Ascending aorta (tissue), 2 donors: ENCODE measurements at regions of chr20 and their contacts with region 1.

Region 1: DNA sequence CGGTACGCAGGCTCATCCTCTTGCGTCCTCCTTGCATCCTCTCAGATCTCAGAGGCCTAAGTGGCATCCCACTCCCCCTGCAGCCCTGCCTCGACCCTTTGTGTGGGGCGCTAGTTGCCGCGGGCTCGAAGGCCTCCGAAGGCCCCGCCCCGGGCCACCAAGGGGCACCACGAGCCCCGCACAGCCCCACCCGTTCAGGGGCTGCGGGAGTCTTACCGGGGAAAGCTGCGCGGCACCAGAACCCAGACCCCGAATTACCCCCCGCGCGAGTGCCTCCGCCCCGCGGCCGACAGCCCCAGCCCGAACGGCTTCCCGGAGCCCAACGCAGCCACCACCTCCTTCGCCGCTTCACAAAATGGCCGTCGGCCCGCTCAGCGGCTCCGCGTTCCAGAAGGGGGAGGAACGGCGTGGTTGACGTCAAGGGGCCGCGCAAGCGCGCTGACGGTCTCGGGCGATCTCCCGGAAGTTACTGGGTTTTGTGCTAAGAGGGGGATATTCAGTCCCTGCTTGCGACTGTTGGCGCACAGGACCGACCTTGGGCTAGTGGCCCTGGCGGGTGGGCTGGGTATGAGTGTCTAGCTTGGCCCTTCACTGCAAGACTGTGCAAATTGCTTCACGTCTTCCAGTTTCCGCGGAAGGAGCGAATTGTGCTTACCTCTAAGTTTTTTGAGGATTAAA is at the starts of genes CPNE1 and RBM12:
- DNase-seq: peak; percentile 61 to 95
- H3K4me3 ChIP-seq: peak within 1 kb of the TSS; percentile 91 to 96
- H3K27ac ChIP-seq: peak within 1 kb of the TSS; percentile 97 to 98
- H3K4me1 ChIP-seq: peaks cover 2 to 23% of the 10 kb centered on the region in 2 donors
- H3K27me3 ChIP-seq: no peaks in the 10 kb centered on the region
- CTCF ChIP-seq: peak in 2 of 3 experiments; percentile 7 to 14
- total RNA-seq, gene CPNE1: 208 TPM
- total RNA-seq, gene RBM12: 8.9 TPM

Region 2: DNA sequence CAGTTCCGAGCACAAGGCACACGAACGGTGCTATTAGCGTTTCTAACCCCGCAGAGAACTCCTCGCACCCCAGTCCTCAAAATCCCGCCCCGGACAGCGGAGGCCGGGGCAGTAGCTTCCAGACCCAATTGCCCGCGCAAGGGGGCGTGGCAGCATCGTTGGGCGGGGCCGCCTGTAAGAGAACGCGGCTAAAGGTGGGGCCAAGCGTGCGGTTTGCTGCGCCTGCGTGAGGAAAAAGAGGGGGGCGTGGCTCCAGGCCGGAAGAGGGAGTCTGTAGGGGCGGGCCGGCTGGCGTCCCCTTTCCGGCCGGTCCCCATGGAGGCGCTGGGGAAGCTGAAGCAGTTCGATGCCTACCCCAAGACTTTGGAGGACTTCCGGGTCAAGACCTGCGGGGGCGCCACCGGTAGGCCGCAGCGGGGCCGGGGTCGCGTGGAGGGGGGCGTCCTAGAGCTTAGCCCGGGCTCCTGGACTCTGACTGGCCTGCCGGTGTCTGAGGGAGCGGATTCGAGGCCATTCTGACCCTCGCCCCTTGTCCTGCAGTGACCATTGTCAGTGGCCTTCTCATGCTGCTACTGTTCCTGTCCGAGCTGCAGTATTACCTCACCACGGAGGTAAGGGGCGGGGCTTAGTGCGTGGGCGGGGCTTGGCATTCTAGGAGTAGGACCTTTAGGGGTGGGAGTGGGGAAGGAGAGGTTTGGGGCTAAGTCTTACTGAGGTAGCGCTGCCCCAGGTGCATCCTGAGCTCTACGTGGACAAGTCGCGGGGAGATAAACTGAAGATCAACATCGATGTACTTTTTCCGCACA is 122.7 kb before region 1 on chr20 and contains the start of gene ERGIC3:
- intact Hi-C with region 1: loop called (anchors 2 kb)
- DNase-seq: peak; percentile 86 to 98
- H3K4me3 ChIP-seq: peak within 1 kb of the TSS; percentile 75 to 85
- H3K27ac ChIP-seq: peak within 1 kb of the TSS; percentile 42 to 72
- H3K4me1 ChIP-seq: peaks cover 0 to 12% of the 10 kb centered on the region in 2 donors
- H3K27me3 ChIP-seq: no peaks in the 10 kb centered on the region
- CTCF ChIP-seq: peak in 1 of 3 experiments; percentile 7
- total RNA-seq, gene ERGIC3: 67.7 TPM

Region 3: DNA sequence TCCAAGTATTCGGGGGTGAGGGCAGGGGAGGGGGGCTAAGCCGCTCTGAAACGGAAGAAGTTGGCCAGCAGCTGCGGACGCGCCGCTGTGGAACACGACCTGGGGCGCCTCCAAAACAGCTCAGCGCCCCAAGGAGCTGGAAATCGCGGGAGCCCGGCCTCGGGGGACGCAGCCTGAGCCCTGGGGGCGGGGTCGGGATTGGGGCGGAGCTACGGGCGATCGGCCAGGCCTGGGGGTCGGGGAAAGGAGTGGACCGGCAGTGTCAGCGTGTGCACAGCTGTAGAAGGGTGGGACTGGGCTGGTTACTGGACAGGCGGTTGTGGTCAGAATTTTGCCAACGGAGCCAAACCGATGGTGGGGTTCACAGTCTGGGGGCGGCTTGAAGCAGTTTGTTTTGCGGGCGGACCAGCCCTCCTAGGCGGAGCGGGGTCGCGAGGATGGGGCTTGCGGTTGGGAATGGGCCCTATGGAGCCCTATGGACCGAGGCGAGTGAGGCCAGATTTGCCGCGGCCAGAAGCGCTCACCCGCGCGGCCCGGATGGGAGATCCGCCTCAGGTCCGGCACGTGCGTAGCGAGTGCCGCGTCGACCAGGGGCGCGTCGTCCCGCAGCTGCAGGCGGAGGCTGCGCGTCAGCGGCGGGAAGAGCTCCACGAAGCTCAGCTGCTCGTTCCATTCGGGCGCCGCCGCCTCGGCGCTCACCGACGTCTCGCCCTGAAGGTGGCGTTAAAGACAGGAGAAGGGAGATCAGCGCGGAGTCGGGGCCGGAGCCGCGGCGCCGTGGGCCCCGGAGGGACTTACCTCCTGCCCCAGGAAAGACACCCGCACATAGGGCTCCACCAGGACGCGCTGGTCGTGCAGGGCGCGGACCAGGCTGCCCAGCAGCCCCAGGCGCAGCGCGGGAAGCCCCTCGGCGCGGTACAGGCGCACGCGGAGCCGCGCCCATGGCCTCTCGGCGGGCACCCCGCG is 63.4 kb before region 1 on chr20:
- intact Hi-C with region 1: loop called (anchors 5 kb)
- DNase-seq: peak in 1 of 2 donors; percentile 84
- H3K4me3 ChIP-seq: peak overlapping the region; percentile 66 to 71
- H3K27ac ChIP-seq: no peak overlapping the region
- H3K4me1 ChIP-seq: peaks cover 10 to 14% of the 10 kb centered on the region in 2 donors
- H3K27me3 ChIP-seq: no peaks in the 10 kb centered on the region
- CTCF ChIP-seq: peak; percentile 28 to 69 (median 30)

Region 4: GRCh38 chr20:35718972-35719635 is 54.4 kb after region 1 on chr20:
- intact Hi-C with region 1: no loop called
- DNase-seq: no peak
- H3K4me3 ChIP-seq: no peak overlapping the region
- H3K27ac ChIP-seq: no peak overlapping the region
- H3K4me1 ChIP-seq: peaks cover 0 to 4% of the 10 kb centered on the region in 2 donors
- H3K27me3 ChIP-seq: no peaks in the 10 kb centered on the region
- CTCF ChIP-seq: no peak

Region 5: DNA sequence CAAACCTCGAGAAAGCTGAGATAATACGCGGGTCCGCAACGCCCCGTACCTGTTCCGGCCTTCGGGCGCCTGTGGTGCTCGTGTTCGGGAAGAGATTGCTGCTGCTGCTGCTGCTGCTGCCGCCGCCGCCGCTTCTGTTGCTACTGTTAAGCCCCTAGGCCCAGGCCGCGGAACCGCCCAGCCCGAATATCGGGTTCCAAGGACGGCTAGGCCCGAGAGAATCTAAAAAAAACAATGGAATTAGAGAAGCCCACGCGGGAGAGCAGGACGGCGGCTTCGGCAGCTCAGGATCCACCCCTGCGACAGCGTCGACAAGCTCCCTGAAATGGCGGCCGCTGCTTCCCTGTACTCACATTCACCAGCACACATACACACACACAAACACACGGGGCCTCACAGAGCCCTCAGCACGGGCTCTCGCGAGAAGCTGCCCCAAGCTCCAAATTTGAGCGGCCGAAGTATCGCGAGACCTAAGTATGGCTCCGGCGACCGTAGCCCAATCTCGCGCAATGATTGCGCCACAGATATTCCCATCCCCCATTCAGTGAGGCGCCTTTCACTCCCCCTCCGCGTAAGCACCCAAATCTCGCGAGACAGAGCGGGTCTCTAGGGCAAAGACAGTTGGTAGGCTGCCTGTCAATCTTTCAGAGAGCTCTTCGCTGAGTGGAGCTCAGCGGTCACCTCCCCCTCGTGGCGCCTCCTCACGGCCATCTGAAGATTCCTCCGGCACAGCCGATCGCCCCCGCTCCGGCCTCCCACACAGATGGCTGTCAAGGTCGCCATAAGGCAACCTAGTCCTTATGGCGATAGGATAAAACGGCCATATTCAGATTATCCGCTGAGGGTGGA is 77.4 kb after region 1 on chr20 and contains the start of gene RBM39:
- intact Hi-C with region 1: loop called (anchors 1 kb)
- DNase-seq: peak; percentile 98 to 100
- H3K4me3 ChIP-seq: peak within 1 kb of the TSS; percentile 84 to 86
- H3K27ac ChIP-seq: peak within 1 kb of the TSS; percentile 99 to 100
- H3K4me1 ChIP-seq: peaks cover 10 to 28% of the 10 kb centered on the region in 2 donors
- H3K27me3 ChIP-seq: no peaks in the 10 kb centered on the region
- CTCF ChIP-seq: peak; percentile 22 to 50 (median 42)
- total RNA-seq, gene RBM39: 232 TPM